Ascending aorta (tissue), 2 donors: ENCODE measurements at regions of chr4 and their contacts with region 1.

Region 1: GRCh38 chr4:88211473-88212252 is 53.2 kb upstream of the ABCG2 start:
- DNase-seq: no peak
- H3K4me3 ChIP-seq: no peak overlapping the region
- H3K27ac ChIP-seq: no peak overlapping the region
- H3K4me1 ChIP-seq: peaks cover 0 to 3% of the 10 kb centered on the region in 2 donors
- H3K27me3 ChIP-seq: no peaks in the 10 kb centered on the region
- CTCF ChIP-seq: peak; percentile 63 to 78 (median 65)

Region 2: GRCh38 chr4:87679449-87680169 is 532.1 kb before region 1 on chr4:
- intact Hi-C with region 1: loop called (anchors 10 kb)
- DNase-seq: no peak
- H3K4me3 ChIP-seq: no peak overlapping the region
- H3K27ac ChIP-seq: no peak overlapping the region
- H3K4me1 ChIP-seq: no peaks in the 10 kb centered on the region
- H3K27me3 ChIP-seq: no peaks in the 10 kb centered on the region
- CTCF ChIP-seq: peak; percentile 58 to 82 (median 81)

Region 3: GRCh38 chr4:87848622-87849351 is 362.9 kb before region 1 on chr4:
- intact Hi-C with region 1: loop called (anchors 1 kb)
- DNase-seq: peak in 1 of 2 donors; percentile 80
- H3K4me3 ChIP-seq: peak overlapping the region; percentile 41 to 60
- H3K27ac ChIP-seq: peak overlapping the region; percentile 14 to 59
- H3K4me1 ChIP-seq: peaks cover 0 to 6% of the 10 kb centered on the region in 2 donors
- H3K27me3 ChIP-seq: no peaks in the 10 kb centered on the region
- CTCF ChIP-seq: peak; percentile 61 to 68 (median 63)

Region 4: GRCh38 chr4:87973283-87974169 is 238.1 kb before region 1 on chr4:
- intact Hi-C with region 1: loop called (anchors 5 kb)
- DNase-seq: peak in 1 of 2 donors; percentile 73
- H3K4me3 ChIP-seq: peak overlapping the region in 1 of 2 donors; percentile 18
- H3K27ac ChIP-seq: no peak overlapping the region
- H3K4me1 ChIP-seq: no peaks in the 10 kb centered on the region
- H3K27me3 ChIP-seq: no peaks in the 10 kb centered on the region
- CTCF ChIP-seq: peak; percentile 67 to 86 (median 73)